Activated B cell treated with CpG ODN at 0.5 μM for 24 hours (primary cell): ENCODE measurements at regions of chr5 and their contacts with region 1.

Region 1: GRCh38 chr5:178859625-178860531 is at the start of gene ZNF354B:
- DNase-seq: peak; percentile 73
- ATAC-seq: peak; percentile 99
- H3K4me3 Mint-ChIP-seq: peak within 1 kb of the TSS; percentile 89
- H3K27ac Mint-ChIP-seq: peak within 1 kb of the TSS; percentile 82
- H3K4me1 Mint-ChIP-seq: peaks cover 19% of the 10 kb centered on the region
- H3K27me3 Mint-ChIP-seq: no peaks in the 10 kb centered on the region
- CTCF ChIP-seq: no peak
- total RNA-seq, gene ZNF354B: 17.5 and 20.0 TPM in 2 replicates

Region 2: GRCh38 chr5:178404987-178405386 is 454.9 kb before region 1 on chr5:
- CTCF ChIA-PET with region 1: no interaction called
- POLR2A ChIA-PET with region 1: no interaction called
- intact Hi-C with region 1: no loop called
- DNase-seq: no peak
- ATAC-seq: no peak
- H3K4me3 Mint-ChIP-seq: no peak overlapping the region
- H3K27ac Mint-ChIP-seq: no peak overlapping the region
- H3K4me1 Mint-ChIP-seq: no peaks in the 10 kb centered on the region
- H3K27me3 Mint-ChIP-seq: peaks cover 11% of the 10 kb centered on the region
- CTCF ChIP-seq: no peak

Region 3: DNA sequence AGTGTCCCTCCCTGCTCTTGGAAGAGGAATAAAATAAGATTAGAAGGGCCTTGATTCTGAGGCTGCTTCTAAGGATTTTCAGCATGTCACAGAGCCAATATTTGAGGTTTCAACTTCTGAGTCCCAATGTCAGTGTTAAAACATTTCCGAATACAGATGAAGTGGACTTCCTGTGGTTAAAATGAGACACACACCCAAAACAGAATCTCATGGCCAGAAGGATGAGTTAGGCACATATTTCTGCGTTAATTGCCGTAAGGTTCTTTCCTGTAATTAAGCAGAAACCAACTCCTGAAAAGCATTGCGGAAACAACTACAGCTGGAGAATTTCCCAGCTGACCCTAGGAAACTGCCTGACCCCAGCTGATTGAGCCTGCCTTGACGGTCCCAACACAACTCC is 10.6 kb before region 1 on chr5:
- CTCF ChIA-PET with region 1: no interaction called
- POLR2A ChIA-PET with region 1: no interaction called
- intact Hi-C with region 1: no loop called
- DNase-seq: no peak
- ATAC-seq: no peak
- H3K4me3 Mint-ChIP-seq: no peak overlapping the region
- H3K27ac Mint-ChIP-seq: no peak overlapping the region
- H3K4me1 Mint-ChIP-seq: no peaks in the 10 kb centered on the region
- H3K27me3 Mint-ChIP-seq: peaks cover 18% of the 10 kb centered on the region
- CTCF ChIP-seq: no peak

Region 4: DNA sequence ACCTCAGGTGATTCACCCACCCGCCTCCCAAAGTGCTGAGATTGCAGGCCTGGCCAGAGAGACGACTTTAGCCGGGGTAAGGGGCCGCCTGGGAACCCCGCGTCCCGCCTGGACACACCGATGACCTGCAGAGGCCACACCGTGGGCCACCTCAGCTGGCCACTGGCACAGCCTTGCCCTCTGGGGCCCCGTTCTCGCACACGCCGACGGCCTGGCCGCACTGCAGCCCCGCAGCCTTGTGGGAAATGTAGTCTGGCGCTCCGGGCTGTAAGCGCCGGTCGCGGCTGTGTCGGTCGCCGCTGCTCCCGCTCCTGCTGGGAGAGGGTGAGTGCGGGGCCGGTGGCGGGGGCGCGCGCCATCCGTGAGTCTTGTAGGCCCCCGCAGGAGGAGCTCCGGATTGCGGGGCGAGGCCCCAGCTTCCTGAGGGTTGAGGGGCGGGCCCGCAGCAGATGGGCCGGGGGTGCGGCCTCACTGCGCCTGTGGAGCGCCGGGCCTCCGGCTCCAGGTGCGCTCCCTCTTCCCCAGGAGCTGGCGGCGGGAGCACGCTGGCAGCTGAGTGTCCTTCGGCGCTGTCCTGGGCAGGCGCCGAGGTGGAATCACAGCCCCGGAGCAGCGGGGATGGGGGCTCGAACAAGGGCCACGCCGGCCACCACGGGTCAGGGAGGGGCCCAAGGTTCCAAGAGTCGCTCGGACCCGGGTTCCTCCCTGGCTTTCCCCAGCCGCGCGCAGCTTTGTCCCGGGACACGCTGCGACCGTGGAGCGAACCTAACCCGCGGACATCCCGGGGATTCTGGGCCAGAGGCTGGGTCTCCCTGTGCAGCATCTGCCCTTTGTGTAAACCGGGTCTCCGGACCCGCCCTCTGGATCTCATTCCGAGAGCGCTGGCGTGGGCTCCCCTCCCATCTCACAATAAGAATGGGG is 36.0 kb after region 1 on chr5 and contains the start of gene ZFP2:
- CTCF ChIA-PET with region 1: no interaction called
- POLR2A ChIA-PET with region 1: interaction called, 6 read pairs
- intact Hi-C with region 1: loop called (anchors 1 kb)
- DNase-seq: peak; percentile 41
- ATAC-seq: peak; percentile 93
- H3K4me3 Mint-ChIP-seq: peak within 1 kb of the TSS; percentile 82
- H3K27ac Mint-ChIP-seq: no peak within 1 kb of the TSS
- H3K4me1 Mint-ChIP-seq: peaks cover 12% of the 10 kb centered on the region
- H3K27me3 Mint-ChIP-seq: no peaks in the 10 kb centered on the region
- CTCF ChIP-seq: no peak
- total RNA-seq, gene ZFP2: 0.44 and 0.95 TPM in 2 replicates

Region 5: GRCh38 chr5:179023528-179024430 is 163.9 kb after region 1 on chr5 and contains the start of gene ZNF879:
- CTCF ChIA-PET with region 1: no interaction called
- POLR2A ChIA-PET with region 1: interaction called, 4 read pairs
- intact Hi-C with region 1: loop called (anchors 1 kb)
- DNase-seq: peak; percentile 94
- ATAC-seq: peak; percentile 92
- H3K4me3 Mint-ChIP-seq: peak within 1 kb of the TSS; percentile 93
- H3K27ac Mint-ChIP-seq: peak within 1 kb of the TSS; percentile 81
- H3K4me1 Mint-ChIP-seq: peaks cover 18% of the 10 kb centered on the region
- H3K27me3 Mint-ChIP-seq: peaks cover 2% of the 10 kb centered on the region
- CTCF ChIP-seq: no peak
- total RNA-seq, gene ZNF879: 8.2 and 9.4 TPM in 2 replicates

Region 6: DNA sequence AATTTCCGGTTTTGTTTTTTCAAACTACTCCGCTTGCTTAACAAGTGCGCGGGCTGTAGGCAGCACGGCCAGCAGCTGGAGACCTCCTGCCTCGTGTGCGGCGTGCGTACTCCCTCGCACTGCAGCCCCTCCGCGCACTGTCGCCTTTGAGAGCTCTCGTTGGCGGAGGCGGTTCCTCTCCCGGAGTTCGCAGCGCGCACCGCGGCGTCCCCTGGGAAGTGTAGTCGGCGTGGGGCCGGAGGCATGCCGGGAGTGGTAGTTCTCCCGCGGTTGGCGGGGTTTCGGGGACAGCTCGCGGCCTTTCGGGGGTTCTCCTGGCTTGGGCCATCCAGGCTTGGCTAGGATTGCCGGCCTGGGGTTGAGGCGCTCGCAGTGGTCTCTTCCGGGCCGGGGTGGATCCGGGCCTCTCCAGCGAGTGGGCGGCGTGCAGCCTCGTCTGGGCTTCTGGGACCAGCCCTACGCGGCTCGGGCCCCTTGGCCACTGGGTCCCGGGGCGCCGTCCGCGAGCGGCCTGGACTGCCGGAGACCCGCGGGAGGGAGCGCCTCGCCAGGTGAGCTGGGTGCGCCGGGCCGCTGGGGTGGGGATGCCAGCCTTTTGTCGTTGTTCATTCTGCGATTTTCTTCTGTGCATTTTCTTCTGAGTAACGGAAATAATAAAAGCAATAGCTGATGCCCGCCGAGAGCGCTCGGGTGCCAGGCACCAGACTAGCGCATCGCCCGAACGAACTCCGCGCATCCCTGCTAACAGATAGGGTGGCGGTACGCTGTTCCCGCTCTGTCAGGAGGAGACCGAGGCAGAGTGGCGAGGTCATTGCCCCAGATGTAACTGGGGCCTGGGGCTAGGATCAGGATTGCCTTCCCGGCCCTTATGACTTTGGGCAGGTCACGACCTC is 200.5 kb after region 1 on chr5 and contains the start of gene ZNF354C:
- CTCF ChIA-PET with region 1: no interaction called
- POLR2A ChIA-PET with region 1: interaction called, 12 read pairs
- intact Hi-C with region 1: loop called (anchors 1 kb)
- DNase-seq: peak; percentile 80
- ATAC-seq: peak; percentile 97
- H3K4me3 Mint-ChIP-seq: peak within 1 kb of the TSS; percentile 92
- H3K27ac Mint-ChIP-seq: peak within 1 kb of the TSS; percentile 86
- H3K4me1 Mint-ChIP-seq: peaks cover 20% of the 10 kb centered on the region
- H3K27me3 Mint-ChIP-seq: no peaks in the 10 kb centered on the region
- CTCF ChIP-seq: no peak
- total RNA-seq, gene ZNF354C: 6.3 and 7.1 TPM in 2 replicates

Region 7: DNA sequence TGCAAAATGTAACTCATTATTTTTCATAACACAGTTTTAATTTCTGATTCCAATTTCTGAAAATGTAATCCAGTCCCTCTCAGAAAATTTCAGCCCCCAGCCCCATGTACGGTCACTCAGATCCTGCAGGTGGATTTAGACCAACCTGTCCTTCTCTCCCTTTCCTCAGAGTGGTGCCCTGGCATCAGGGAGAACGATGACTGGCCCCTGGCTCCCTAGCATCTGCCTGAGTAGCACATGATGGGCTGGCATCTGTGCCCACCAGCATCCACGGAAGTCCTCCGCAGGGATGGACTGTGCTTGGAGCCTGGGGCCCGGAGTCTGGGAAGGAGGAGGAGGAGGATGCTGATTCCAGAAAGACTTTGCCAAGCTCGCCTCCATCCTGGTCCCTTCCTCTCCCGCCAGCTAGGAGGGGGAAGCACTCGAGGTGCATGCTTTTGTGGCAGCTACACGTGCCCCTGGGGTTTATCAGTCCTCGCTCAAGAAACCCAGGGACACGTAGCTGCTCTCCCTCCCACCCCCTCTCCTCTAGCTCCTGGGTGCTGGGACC is 636.1 kb after region 1 on chr5:
- CTCF ChIA-PET with region 1: no interaction called
- POLR2A ChIA-PET with region 1: no interaction called
- intact Hi-C with region 1: loop called (anchors 1 kb)
- DNase-seq: no peak
- ATAC-seq: no peak
- H3K4me3 Mint-ChIP-seq: no peak overlapping the region
- H3K27ac Mint-ChIP-seq: no peak overlapping the region
- H3K4me1 Mint-ChIP-seq: peaks cover 2% of the 10 kb centered on the region
- H3K27me3 Mint-ChIP-seq: peaks cover 2% of the 10 kb centered on the region
- CTCF ChIP-seq: no peak